ENCODE measurements at regions of chr3 and their contacts with region 1.

Region 1: GRCh38 chr3:112327371-112327951 is 5.5 kb upstream of the CD200 start:
- DNase-seq: peak; percentile 80
- ATAC-seq: peak; percentile 99
- H3K4me3 ChIP-seq: no peak overlapping the region
- H3K4me3 Mint-ChIP-seq: no peak overlapping the region
- H3K27ac ChIP-seq: no peak overlapping the region
- H3K27ac Mint-ChIP-seq: no peak overlapping the region
- H3K4me1 ChIP-seq: peaks cover 1 to 3% of the 10 kb centered on the region in 2 donors
- H3K4me1 Mint-ChIP-seq: peaks cover 8% of the 10 kb centered on the region
- H3K27me3 ChIP-seq: no peaks in the 10 kb centered on the region
- H3K27me3 Mint-ChIP-seq: no peaks in the 10 kb centered on the region
- CTCF ChIP-seq: peak; percentile 88

Region 2: GRCh38 chr3:112187300-112187699 is 140.2 kb before region 1 on chr3:
- CTCF ChIA-PET with region 1: no interaction called
- POLR2A ChIA-PET with region 1: interaction called, 12 read pairs
- intact Hi-C with region 1: no loop called
- DNase-seq: no peak
- ATAC-seq: no peak
- H3K4me3 ChIP-seq: no peak overlapping the region
- H3K4me3 Mint-ChIP-seq: no peak overlapping the region
- H3K27ac ChIP-seq: no peak overlapping the region
- H3K27ac Mint-ChIP-seq: no peak overlapping the region
- H3K4me1 ChIP-seq: no peaks in the 10 kb centered on the region
- H3K4me1 Mint-ChIP-seq: peaks cover 2% of the 10 kb centered on the region
- H3K27me3 ChIP-seq: peaks cover 0 to 3% (median 0%) of the 10 kb centered on the region in 4 experiments
- H3K27me3 Mint-ChIP-seq: peaks cover 3% of the 10 kb centered on the region
- CTCF ChIP-seq: no peak

Region 3: DNA sequence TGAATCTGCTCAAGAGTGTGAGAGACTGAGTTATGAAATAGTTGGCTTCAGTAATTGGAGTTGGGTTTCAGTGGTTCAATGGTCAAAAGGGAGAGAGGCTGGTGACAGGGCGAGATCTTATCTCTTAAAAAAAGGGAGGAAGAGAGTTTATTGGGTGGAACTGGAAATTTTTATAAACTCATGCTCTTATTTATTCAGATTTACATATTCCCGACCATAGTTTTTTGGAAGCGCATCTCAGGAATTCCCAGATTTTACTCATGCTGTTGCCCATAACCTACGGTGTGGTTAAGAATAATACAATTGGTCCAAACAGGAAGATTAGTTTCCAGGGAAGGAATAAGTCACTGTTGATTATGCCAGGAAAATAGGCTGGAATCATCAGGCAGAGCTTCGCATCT is 46.9 kb after region 1 on chr3:
- CTCF ChIA-PET with region 1: no interaction called
- POLR2A ChIA-PET with region 1: no interaction called
- intact Hi-C with region 1: loop called (anchors 5 kb)
- DNase-seq: no peak
- ATAC-seq: no peak
- H3K4me3 ChIP-seq: no peak overlapping the region
- H3K4me3 Mint-ChIP-seq: no peak overlapping the region
- H3K27ac ChIP-seq: no peak overlapping the region
- H3K27ac Mint-ChIP-seq: no peak overlapping the region
- H3K4me1 ChIP-seq: peaks cover 15 to 17% of the 10 kb centered on the region in 2 donors
- H3K4me1 Mint-ChIP-seq: peaks cover 35% of the 10 kb centered on the region
- H3K27me3 ChIP-seq: no peaks in the 10 kb centered on the region
- H3K27me3 Mint-ChIP-seq: no peaks in the 10 kb centered on the region
- CTCF ChIP-seq: no peak

Region 4: GRCh38 chr3:112437146-112438022 is 109.9 kb after region 1 on chr3:
- CTCF ChIA-PET with region 1: no interaction called
- POLR2A ChIA-PET with region 1: no interaction called
- intact Hi-C with region 1: loop called (anchors 1 kb)
- DNase-seq: peak; percentile 36
- ATAC-seq: peak; percentile 66
- H3K4me3 ChIP-seq: no peak overlapping the region
- H3K4me3 Mint-ChIP-seq: peak overlapping the region; percentile 5
- H3K27ac ChIP-seq: no peak overlapping the region
- H3K27ac Mint-ChIP-seq: no peak overlapping the region
- H3K4me1 ChIP-seq: peaks cover 12 to 14% of the 10 kb centered on the region in 2 donors
- H3K4me1 Mint-ChIP-seq: peaks cover 56% of the 10 kb centered on the region
- H3K27me3 ChIP-seq: no peaks in the 10 kb centered on the region
- H3K27me3 Mint-ChIP-seq: no peaks in the 10 kb centered on the region
- CTCF ChIP-seq: no peak

Region 5: DNA sequence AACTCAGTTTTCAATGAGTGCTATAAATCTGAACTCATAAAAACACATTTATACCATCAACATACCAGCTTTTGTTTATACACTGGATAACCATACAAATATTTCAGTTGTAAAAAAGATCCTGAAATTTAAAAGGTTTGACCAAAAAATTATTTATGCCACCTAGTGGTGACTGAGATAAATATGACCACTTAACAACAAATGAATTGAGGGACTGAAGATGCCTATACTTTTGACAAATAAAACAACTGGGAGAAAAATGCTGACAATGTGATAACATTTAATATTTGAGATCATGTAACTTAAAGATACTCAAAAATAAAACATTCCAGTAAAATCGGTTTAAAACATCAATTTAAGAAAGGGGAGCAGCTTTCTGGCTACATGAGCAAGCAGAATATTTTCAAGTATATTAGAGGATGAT is 203.9 kb after region 1 on chr3:
- CTCF ChIA-PET with region 1: interaction called, 11 read pairs
- POLR2A ChIA-PET with region 1: no interaction called
- intact Hi-C with region 1: loop called (anchors 1 kb)
- DNase-seq: peak; percentile 57
- ATAC-seq: no peak
- H3K4me3 ChIP-seq: no peak overlapping the region
- H3K4me3 Mint-ChIP-seq: no peak overlapping the region
- H3K27ac ChIP-seq: peak overlapping the region in 1 of 2 donors; percentile 18
- H3K27ac Mint-ChIP-seq: peak overlapping the region; percentile 22
- H3K4me1 ChIP-seq: no peaks in the 10 kb centered on the region
- H3K4me1 Mint-ChIP-seq: peaks cover 5% of the 10 kb centered on the region
- H3K27me3 ChIP-seq: no peaks in the 10 kb centered on the region
- H3K27me3 Mint-ChIP-seq: no peaks in the 10 kb centered on the region
- CTCF ChIP-seq: peak; percentile 82